Dendritic cell treated with granulocyte-macrophage colony-stimulating factor and Interleukin-4, amounts not matched to agents 40 ng/mL and 50 ng/mL, for 4 days (primary cell): ENCODE measurements at regions of chr1 and their contacts with region 1.

Region 1: DNA sequence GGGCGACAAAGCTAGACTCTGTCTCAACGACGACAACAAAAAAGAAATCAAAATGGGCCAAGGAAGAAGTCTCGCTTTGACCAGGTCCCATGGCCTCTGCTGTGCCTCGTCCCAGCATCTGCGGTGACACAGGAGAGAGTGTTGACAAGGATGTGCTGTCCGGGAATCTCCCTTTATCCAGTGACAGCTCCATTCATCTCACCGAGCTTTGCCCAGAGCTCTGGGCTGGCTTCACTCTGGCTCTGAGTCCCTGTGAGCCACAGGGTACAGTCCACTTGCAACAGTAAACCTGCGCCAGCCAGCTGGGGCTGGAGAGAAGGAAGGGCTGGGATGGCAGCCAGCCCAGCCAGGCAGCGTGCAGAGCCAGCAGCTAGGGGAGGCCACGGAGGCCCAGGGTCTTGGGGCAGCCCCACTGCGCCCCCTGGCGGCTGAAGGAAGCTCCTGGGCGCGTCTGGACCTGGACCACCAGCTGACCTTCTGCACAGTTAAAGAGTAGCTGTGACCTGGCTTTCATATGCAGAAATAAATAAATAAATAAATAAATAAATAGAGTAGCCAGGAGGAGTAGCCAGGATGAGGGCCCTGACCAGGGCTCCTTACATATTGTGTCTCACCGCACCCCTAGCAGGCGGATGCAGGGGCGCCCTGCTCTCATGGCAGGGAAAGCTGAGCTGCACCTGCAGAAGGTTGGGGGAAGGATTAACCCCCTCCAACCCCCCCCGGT is 29.7 kb downstream of the ENO1 start:
- H3K4me3 Mint-ChIP-seq: no peak overlapping the region
- H3K27ac Mint-ChIP-seq: no peak overlapping the region
- H3K4me1 Mint-ChIP-seq: peaks cover 5% of the 10 kb centered on the region
- H3K27me3 Mint-ChIP-seq: peaks cover 7% of the 10 kb centered on the region

Region 2: GRCh38 chr1:8560611-8561544 is 287.9 kb before region 1 on chr1:
- intact Hi-C with region 1: loop called (anchors 2 kb)
- H3K4me3 Mint-ChIP-seq: no peak overlapping the region
- H3K27ac Mint-ChIP-seq: no peak overlapping the region
- H3K4me1 Mint-ChIP-seq: peaks cover 11% of the 10 kb centered on the region
- H3K27me3 Mint-ChIP-seq: no peaks in the 10 kb centered on the region

Region 3: DNA sequence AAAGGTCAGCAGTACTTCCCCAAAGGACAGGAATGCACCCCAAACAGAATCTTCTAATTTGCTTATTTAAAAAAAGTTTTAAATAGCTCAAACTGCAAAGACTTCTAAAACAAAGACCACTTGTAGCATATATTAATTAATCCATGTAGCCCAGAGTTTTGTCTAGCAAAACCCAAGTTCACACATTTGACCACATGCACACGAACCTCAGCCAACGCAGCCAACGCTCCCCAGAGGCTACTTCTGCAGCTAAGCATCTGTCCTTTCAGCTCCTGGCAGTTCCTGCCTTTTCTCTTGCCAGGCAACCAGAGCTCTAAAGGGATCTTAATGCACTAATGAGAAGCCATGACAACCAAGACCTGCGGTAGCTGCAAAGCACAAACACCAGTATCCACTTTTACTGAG is 121.0 kb before region 1 on chr1:
- intact Hi-C with region 1: loop called (anchors 10 kb)
- H3K4me3 Mint-ChIP-seq: no peak overlapping the region
- H3K27ac Mint-ChIP-seq: no peak overlapping the region
- H3K4me1 Mint-ChIP-seq: peaks cover 4% of the 10 kb centered on the region
- H3K27me3 Mint-ChIP-seq: no peaks in the 10 kb centered on the region

Region 4: DNA sequence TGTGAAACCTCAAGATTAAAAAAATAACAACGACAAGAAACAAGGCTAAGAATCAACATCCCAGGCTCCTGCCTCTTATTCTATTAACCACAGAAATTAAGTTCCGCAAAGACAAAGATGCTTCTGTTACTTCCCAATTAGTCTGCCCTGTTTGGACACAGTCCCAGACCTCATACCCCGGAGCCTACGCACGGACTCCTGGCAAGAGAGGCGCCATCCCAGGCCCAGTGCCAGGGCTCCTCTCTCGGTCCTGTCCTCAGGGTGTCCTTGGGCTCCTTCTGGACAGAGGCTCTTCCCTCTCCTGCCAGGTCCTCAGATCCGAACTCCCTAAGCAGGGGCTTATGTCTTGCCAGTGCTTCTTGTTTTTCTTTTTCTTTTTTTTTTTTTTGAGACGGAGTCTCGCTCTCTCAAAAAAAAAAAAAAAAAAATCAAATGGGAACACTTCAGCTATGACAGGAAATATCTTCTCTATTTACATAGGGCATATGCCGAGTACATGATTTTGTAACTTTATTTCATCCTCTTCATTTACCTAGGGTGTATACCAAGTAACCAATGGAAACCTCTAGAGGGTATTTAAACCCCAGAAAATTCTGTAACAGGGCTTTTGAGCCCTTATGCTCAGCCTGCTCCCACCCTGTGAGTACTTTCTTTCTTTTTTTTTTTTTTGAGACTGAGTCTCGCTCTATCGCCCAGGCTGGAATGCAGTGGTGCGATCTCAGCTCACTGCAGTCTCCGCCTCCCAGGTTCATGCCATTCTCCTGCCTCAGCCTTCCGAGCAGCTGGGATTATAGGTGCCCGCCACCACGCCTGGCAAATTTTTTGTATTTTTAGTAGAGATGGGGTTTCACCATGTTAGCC is 41.3 kb after region 1 on chr1:
- intact Hi-C with region 1: no loop called
- H3K4me3 Mint-ChIP-seq: peak overlapping the region; percentile 48
- H3K27ac Mint-ChIP-seq: peak overlapping the region; percentile 73
- H3K4me1 Mint-ChIP-seq: peaks cover 24% of the 10 kb centered on the region
- H3K27me3 Mint-ChIP-seq: no peaks in the 10 kb centered on the region